CD4-positive, alpha-beta memory T cell (primary cell): ENCODE measurements at regions of chr13 and their contacts with region 1.

Region 1: GRCh38 chr13:31909864-31910551 is 121.6 kb upstream of the FRY start:
- DNase-seq: peak; percentile 49 to 68 (median 60)
- H3K4me3 ChIP-seq: no peak overlapping the region
- H3K4me3 Mint-ChIP-seq: no peak overlapping the region
- H3K27ac ChIP-seq: no peak overlapping the region
- H3K27ac Mint-ChIP-seq: no peak overlapping the region
- H3K4me1 ChIP-seq: peaks cover 20% of the 10 kb centered on the region
- H3K4me1 Mint-ChIP-seq: peaks cover 8 to 43% (median 21%) of the 10 kb centered on the region in 4 donors
- H3K27me3 ChIP-seq: no peaks in the 10 kb centered on the region
- H3K27me3 Mint-ChIP-seq: peaks cover 0 to 2% of the 10 kb centered on the region in 2 donors

Region 2: GRCh38 chr13:31898378-31899071 is 11.5 kb before region 1 on chr13:
- CTCF ChIA-PET with region 1: interaction called, 31 read pairs
- POLR2A ChIA-PET with region 1: interaction called, 4 read pairs
- intact Hi-C with region 1: no loop called
- DNase-seq: peak in 2 of 5 donors; percentile 12 to 19
- H3K4me3 ChIP-seq: no peak overlapping the region
- H3K4me3 Mint-ChIP-seq: peak overlapping the region in 6 of 8 donors; percentile 10 to 67 (median 45)
- H3K27ac ChIP-seq: no peak overlapping the region
- H3K27ac Mint-ChIP-seq: peak overlapping the region in 6 of 7 donors; percentile 31 to 90 (median 72)
- H3K4me1 ChIP-seq: peaks cover 45% of the 10 kb centered on the region
- H3K4me1 Mint-ChIP-seq: peaks cover 19 to 82% (median 44%) of the 10 kb centered on the region in 4 donors
- H3K27me3 ChIP-seq: no peaks in the 10 kb centered on the region
- H3K27me3 Mint-ChIP-seq: peaks cover 0 to 3% of the 10 kb centered on the region in 2 donors

Region 3: GRCh38 chr13:31930901-31931522 is 21.0 kb after region 1 on chr13:
- CTCF ChIA-PET with region 1: interaction called, 47 read pairs
- POLR2A ChIA-PET with region 1: no interaction called
- intact Hi-C with region 1: no loop called
- DNase-seq: peak in 2 of 5 donors; percentile 10 to 35
- H3K4me3 ChIP-seq: no peak overlapping the region
- H3K4me3 Mint-ChIP-seq: no peak overlapping the region
- H3K27ac ChIP-seq: no peak overlapping the region
- H3K27ac Mint-ChIP-seq: no peak overlapping the region
- H3K4me1 ChIP-seq: peaks cover 47% of the 10 kb centered on the region
- H3K4me1 Mint-ChIP-seq: peaks cover 7 to 19% (median 11%) of the 10 kb centered on the region in 4 donors
- H3K27me3 ChIP-seq: no peaks in the 10 kb centered on the region
- H3K27me3 Mint-ChIP-seq: no peaks in the 10 kb centered on the region

Region 4: GRCh38 chr13:32164622-32165268 is 254.7 kb after region 1 on chr13:
- CTCF ChIA-PET with region 1: interaction called, 36 read pairs
- POLR2A ChIA-PET with region 1: interaction called, 8 read pairs
- intact Hi-C with region 1: loop called (anchors 10 kb)
- DNase-seq: peak; percentile 21 to 30 (median 25)
- H3K4me3 ChIP-seq: no peak overlapping the region
- H3K4me3 Mint-ChIP-seq: no peak overlapping the region
- H3K27ac ChIP-seq: no peak overlapping the region
- H3K27ac Mint-ChIP-seq: no peak overlapping the region
- H3K4me1 ChIP-seq: no peaks in the 10 kb centered on the region
- H3K4me1 Mint-ChIP-seq: peaks cover 0 to 5% (median 1%) of the 10 kb centered on the region in 4 donors
- H3K27me3 ChIP-seq: no peaks in the 10 kb centered on the region
- H3K27me3 Mint-ChIP-seq: no peaks in the 10 kb centered on the region

Region 5: DNA sequence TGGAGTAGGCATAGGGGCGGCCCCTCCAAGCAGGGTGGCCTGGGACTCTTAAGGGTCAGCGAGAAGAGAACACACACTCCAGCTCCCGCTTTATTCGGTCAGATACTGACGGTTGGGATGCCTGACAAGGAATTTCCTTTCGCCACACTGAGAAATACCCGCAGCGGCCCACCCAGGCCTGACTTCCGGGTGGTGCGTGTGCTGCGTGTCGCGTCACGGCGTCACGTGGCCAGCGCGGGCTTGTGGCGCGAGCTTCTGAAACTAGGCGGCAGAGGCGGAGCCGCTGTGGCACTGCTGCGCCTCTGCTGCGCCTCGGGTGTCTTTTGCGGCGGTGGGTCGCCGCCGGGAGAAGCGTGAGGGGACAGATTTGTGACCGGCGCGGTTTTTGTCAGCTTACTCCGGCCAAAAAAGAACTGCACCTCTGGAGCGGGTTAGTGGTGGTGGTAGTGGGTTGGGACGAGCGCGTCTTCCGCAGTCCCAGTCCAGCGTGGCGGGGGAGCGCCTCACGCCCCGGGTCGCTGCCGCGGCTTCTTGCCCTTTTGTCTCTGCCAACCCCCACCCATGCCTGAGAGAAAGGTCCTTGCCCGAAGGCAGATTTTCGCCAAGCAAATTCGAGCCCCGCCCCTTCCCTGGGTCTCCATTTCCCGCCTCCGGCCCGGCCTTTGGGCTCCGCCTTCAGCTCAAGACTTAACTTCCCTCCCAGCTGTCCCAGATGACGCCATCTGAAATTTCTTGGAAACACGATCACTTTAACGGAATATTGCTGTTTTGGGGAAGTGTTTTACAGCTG is 405.4 kb after region 1 on chr13 and contains the starts of genes BRCA2 and ZAR1L:
- CTCF ChIA-PET with region 1: interaction called, 19 read pairs
- POLR2A ChIA-PET with region 1: interaction called, 3 read pairs
- intact Hi-C with region 1: loop called (anchors 1 kb)
- DNase-seq: peak; percentile 85 to 89 (median 87)
- H3K4me3 ChIP-seq: peak within 1 kb of the TSS; percentile 59 to 81
- H3K4me3 Mint-ChIP-seq: peak within 1 kb of the TSS; percentile 91 to 100 (median 96)
- H3K27ac ChIP-seq: peak within 1 kb of the TSS; percentile 99
- H3K27ac Mint-ChIP-seq: peak within 1 kb of the TSS; percentile 98 to 100 (median 100)
- H3K4me1 ChIP-seq: peaks cover 16% of the 10 kb centered on the region
- H3K4me1 Mint-ChIP-seq: peaks cover 7 to 27% (median 11%) of the 10 kb centered on the region in 4 donors
- H3K27me3 ChIP-seq: no peaks in the 10 kb centered on the region
- H3K27me3 Mint-ChIP-seq: no peaks in the 10 kb centered on the region
- total RNA-seq, gene BRCA2: 3.2 TPM
- total RNA-seq, gene ZAR1L: not detected

Region 6: GRCh38 chr13:32581177-32581786 is 671.3 kb after region 1 on chr13:
- CTCF ChIA-PET with region 1: interaction called, 13 read pairs
- POLR2A ChIA-PET with region 1: no interaction called
- intact Hi-C with region 1: no loop called
- DNase-seq: peak in 3 of 5 donors; percentile 19 to 33 (median 28)
- H3K4me3 ChIP-seq: no peak overlapping the region
- H3K4me3 Mint-ChIP-seq: no peak overlapping the region
- H3K27ac ChIP-seq: no peak overlapping the region
- H3K27ac Mint-ChIP-seq: no peak overlapping the region
- H3K4me1 ChIP-seq: peaks cover 8% of the 10 kb centered on the region
- H3K4me1 Mint-ChIP-seq: peaks cover 1 to 10% (median 7%) of the 10 kb centered on the region in 4 donors
- H3K27me3 ChIP-seq: no peaks in the 10 kb centered on the region
- H3K27me3 Mint-ChIP-seq: no peaks in the 10 kb centered on the region